BJ (cell line): ENCODE measurements at regions of chr15 and their contacts with region 1.

Region 1: DNA sequence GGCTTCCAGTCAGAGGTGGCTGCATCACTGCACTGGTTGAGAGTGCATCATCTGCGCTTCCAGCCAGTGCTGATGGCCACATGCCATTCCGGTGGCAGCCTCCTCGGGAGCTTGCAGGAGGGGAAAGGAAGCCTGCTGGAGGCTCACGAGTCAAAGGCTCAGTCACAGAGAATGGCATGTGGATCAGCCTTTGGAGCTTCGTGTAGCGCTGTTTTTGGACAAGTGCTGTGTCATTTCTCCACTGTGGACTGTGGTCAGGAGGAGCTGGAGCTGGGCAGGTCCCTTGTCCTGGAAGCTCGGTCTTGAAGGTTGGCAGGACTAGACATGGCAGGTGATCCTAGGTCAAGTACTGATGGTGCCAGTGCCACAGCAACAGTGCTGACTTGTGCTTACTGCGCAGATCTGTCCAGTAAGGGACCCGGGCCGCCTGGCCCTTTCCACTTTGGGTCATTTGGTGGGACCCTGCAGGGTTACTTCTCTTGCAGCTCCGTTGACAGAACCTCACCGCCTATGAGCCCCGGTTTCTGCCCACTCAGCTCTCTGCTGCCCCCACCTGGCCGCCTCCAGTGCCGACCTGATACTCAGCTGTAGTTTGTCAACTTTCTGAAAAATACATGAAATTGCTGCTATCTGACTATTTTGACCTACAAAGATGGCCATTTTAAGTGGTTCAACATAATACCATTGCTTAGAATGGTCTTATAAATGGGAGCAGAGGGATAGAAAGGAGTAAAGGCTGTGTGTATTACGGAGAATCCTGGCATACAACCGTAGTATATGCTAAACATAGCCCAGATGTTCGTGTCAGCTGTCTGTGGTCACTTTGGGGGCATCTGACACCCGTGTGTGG is 27.6 kb upstream of the TRPM1 start:
- DNase-seq: no peak
- H3K4me3 ChIP-seq: no peak overlapping the region
- H3K27me3 ChIP-seq: no peaks in the 10 kb centered on the region; the same call in 1 of the 2 replicates
- CTCF ChIP-seq: peak; percentile 99

Region 2: DNA sequence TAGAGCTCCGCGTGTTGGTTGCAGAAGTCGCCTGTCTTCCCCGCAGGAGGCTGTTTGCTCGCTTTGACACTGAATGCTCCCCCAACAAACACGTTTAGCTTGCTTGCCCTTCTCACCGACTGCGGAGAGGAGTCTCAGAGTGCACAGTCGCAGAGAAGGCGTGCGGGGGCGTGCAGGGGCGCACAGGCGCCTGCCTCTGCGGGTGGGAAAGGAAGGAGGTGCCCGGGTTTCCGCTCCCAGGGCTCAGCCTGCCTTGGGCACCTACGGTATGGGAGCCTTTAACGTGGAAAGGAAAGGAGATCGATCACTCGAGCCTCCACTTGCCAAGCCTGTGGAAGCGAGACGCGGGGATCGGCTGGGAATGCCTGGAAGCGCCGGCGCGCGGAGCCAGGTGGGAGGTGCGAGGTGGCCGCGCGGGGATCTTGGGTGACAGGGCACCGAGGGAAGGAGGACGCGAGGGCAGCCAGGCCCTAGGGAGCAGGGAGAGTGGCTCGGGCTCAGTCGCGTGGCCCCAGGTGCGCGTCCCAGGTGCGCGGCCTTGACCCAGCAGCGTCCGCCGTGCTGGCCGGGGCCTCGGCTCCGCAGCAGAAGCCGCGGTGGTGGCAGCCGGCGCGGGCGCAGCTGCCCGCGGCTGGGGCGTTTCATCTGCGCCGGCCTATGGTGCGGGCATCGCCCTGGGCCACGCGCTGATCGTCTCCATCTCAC is 225.5 kb before region 1 on chr15 and contains the start of gene FAN1:
- CTCF ChIA-PET with region 1: interaction called, 40 read pairs
- POLR2A ChIA-PET with region 1: no interaction called
- DNase-seq: peak; percentile 19
- H3K4me3 ChIP-seq: peak within 1 kb of the TSS; percentile 89
- H3K27me3 ChIP-seq: no peaks in the 10 kb centered on the region
- CTCF ChIP-seq: no peak
- polyA plus RNA-seq, gene FAN1: 5.8 and 6.8 TPM in 2 replicates

Region 3: GRCh38 chr15:30962079-30962478 is 167.1 kb before region 1 on chr15:
- CTCF ChIA-PET with region 1: interaction called, 12 read pairs
- POLR2A ChIA-PET with region 1: no interaction called
- DNase-seq: no peak
- H3K4me3 ChIP-seq: no peak overlapping the region
- H3K27me3 ChIP-seq: no peaks in the 10 kb centered on the region
- CTCF ChIP-seq: no peak

Region 4: DNA sequence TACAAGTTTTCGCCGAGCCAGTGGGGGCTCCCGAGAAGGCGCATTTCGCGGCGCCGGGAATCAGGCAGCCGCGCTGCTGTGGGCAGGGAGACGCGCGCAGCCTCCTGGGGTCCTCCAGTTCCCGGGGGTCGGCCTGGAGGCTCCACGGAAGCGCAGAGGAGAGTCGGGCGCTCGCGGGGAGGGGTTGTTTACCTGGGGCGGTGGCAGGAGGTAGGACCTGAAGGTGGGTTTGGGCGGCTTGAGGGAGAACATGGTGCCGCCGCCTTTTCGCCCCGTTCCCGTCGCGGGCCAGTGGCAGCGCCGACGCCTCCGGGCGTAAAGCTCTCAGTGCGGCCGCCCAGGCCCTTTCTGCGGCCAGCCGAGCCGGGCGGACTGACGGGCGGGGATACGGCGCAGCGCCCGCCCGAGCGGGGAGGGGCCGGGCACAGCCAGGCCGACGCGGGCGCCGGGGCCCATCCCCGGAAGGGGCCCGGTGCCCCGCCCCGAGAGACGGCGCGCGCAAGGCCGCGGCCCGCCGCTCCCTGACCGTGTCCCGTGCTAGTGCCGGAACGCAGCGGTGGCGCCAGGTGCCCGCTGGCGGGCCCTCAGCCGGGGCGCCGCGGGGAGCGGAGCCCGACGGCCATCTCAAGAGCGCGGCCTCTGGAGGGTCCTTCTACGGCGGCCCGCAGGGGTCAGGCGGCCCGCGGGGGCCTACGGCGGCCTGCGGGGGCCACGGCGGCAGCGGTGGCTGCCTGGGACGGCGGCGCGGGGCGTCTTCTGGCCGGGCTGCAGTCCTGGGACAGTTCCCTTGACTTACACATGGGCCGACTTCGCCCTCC is 137.7 kb before region 1 on chr15 and contains the start of gene MTMR10:
- CTCF ChIA-PET with region 1: interaction called, 14 read pairs
- POLR2A ChIA-PET with region 1: no interaction called
- DNase-seq: peak; percentile 15
- H3K4me3 ChIP-seq: peak within 1 kb of the TSS; percentile 82
- H3K27me3 ChIP-seq: no peaks in the 10 kb centered on the region
- CTCF ChIP-seq: no peak
- polyA plus RNA-seq, gene MTMR10: 13.7 and 20.4 TPM in 2 replicates

Region 5: GRCh38 chr15:31024330-31024729 is 104.8 kb before region 1 on chr15:
- CTCF ChIA-PET with region 1: interaction called, 17 read pairs
- POLR2A ChIA-PET with region 1: no interaction called
- DNase-seq: peak; percentile 96
- H3K4me3 ChIP-seq: no peak overlapping the region
- H3K27me3 ChIP-seq: no peaks in the 10 kb centered on the region
- CTCF ChIP-seq: no peak

Region 6: GRCh38 chr15:31111091-31111647 is 18.0 kb before region 1 on chr15:
- CTCF ChIA-PET with region 1: interaction called, 28 read pairs
- POLR2A ChIA-PET with region 1: no interaction called
- DNase-seq: peak; percentile 51
- H3K4me3 ChIP-seq: no peak overlapping the region
- H3K27me3 ChIP-seq: no peaks in the 10 kb centered on the region
- CTCF ChIP-seq: no peak